ENCODE measurements at regions of chr1 and their contacts with region 1.

Region 1: DNA sequence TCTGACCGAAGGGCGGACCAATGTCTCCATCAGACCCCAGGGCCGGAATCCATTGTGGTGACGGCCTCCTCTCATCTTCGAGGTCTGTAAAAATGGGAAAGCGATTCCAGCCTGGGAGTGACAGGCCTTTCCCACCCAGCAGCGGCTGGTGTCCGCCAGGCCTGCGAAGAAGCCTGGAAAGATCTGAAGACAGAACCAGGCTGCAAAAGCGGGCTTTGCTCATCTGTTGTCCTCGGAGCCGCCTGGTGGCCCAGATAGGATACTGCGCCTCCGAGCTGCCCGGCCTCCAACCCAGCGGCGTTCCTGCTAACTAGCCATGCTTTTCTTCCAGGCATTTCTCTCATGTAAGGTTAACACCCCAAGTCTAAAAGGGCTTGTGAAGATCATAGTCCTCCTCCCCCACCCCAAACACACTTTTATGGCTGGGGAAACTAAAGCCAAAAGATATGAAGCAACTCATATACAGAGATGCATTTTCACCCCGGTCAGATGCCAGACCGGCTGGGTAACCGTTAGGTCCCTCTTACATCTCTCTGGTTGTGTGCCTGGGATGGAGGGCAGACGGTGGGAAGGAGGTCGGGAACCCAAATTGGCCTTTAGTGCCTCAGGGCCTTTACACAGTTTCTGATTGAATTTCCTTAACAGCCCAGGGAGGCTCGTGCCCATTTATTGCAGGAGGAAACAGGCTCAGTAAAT is 1.9 kb upstream of the DHRS3 start:
- DNase-seq: peak; percentile 55 to 79
- H3K4me3 ChIP-seq: peak overlapping the region; percentile 91
- H3K27ac ChIP-seq: peak overlapping the region; percentile 90
- H3K4me1 ChIP-seq: peaks cover 14% of the 10 kb centered on the region
- H3K27me3 ChIP-seq: no peaks in the 10 kb centered on the region
- CTCF ChIP-seq: peak; percentile 90

Region 2: DNA sequence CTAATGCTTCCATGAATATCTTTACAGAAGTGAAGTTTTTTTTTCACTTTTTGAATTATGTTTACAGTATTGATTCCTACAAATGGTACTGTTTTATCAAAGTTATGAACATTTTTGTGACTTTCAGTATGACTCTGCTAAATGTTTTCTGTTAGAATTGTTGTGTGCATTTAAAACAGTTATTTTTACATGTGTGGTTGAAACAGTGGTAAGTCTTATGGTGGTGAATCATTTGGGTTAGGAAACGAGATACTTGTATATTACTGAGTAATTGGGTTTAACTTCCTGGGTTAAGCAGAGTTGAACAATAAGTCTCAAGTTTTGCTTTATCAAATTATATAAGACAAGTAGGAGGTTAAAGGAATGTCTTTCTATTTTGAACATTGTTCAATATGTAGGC is 323.3 kb before region 1 on chr1:
- CTCF ChIA-PET with region 1: no interaction called
- POLR2A ChIA-PET with region 1: no interaction called
- intact Hi-C with region 1: no loop called
- DNase-seq: no peak
- H3K4me3 ChIP-seq: no peak overlapping the region
- H3K27ac ChIP-seq: peak overlapping the region; percentile 9; the same call in 1 of the 2 replicates
- H3K4me1 ChIP-seq: no peaks in the 10 kb centered on the region
- H3K27me3 ChIP-seq: no peaks in the 10 kb centered on the region
- CTCF ChIP-seq: no peak

Region 3: GRCh38 chr1:12359359-12360133 is 260.4 kb before region 1 on chr1:
- CTCF ChIA-PET with region 1: no interaction called
- POLR2A ChIA-PET with region 1: no interaction called
- intact Hi-C with region 1: no loop called
- DNase-seq: no peak
- H3K4me3 ChIP-seq: no peak overlapping the region
- H3K27ac ChIP-seq: no peak overlapping the region
- H3K4me1 ChIP-seq: no peaks in the 10 kb centered on the region
- H3K27me3 ChIP-seq: no peaks in the 10 kb centered on the region
- CTCF ChIP-seq: no peak

Region 4: GRCh38 chr1:12386130-12386529 is 233.8 kb before region 1 on chr1:
- CTCF ChIA-PET with region 1: no interaction called
- POLR2A ChIA-PET with region 1: no interaction called
- intact Hi-C with region 1: loop called (anchors 2 kb)
- DNase-seq: peak; percentile 52 to 83
- H3K4me3 ChIP-seq: no peak overlapping the region
- H3K27ac ChIP-seq: peak overlapping the region; percentile 64
- H3K4me1 ChIP-seq: peaks cover 37% of the 10 kb centered on the region
- H3K27me3 ChIP-seq: no peaks in the 10 kb centered on the region
- CTCF ChIP-seq: no peak

Region 5: GRCh38 chr1:12467570-12468286 is 152.2 kb before region 1 on chr1:
- CTCF ChIA-PET with region 1: no interaction called
- POLR2A ChIA-PET with region 1: no interaction called
- intact Hi-C with region 1: no loop called
- DNase-seq: no peak
- H3K4me3 ChIP-seq: no peak overlapping the region
- H3K27ac ChIP-seq: no peak overlapping the region
- H3K4me1 ChIP-seq: peaks cover 12% of the 10 kb centered on the region
- H3K27me3 ChIP-seq: no peaks in the 10 kb centered on the region
- CTCF ChIP-seq: no peak

Region 6: DNA sequence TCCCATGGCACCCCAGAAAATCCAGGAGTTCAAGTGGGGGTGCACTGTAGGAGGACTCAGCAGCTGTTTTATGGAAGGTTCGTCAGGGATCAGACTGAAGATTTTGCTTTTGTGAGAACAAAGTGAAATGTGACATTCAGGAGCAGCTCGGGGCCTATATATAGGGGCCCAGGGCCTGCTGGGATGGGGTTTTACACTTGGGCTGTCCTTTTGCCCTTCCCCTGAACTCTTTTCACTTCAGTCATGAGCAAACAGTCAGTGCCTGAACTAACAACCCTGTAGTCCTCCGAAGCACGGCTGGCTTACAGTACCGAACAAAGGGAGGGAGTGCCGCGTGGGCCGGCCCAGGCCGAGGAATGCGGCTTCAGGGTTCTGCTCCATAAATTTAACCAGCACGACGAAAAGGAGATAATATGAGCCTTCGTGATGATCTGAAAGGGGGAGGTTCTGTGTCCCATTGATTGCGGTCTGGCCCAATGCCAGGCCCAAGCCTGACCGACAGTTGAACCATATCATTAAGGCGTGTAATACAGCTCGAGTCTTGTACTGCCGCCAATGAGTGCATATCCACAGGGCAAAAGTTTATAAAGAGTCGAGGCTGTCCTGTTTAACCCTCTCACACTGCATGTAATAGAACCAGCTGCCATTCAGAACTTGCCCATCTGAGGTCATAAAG is 141.9 kb before region 1 on chr1:
- CTCF ChIA-PET with region 1: interaction called, 7 read pairs
- POLR2A ChIA-PET with region 1: interaction called, 18 read pairs
- intact Hi-C with region 1: loop called (anchors 1 kb)
- DNase-seq: peak; percentile 94 to 95
- H3K4me3 ChIP-seq: peak overlapping the region; percentile 29; the same call in 1 of the 2 replicates
- H3K27ac ChIP-seq: peak overlapping the region; percentile 96
- H3K4me1 ChIP-seq: peaks cover 82% of the 10 kb centered on the region
- H3K27me3 ChIP-seq: no peaks in the 10 kb centered on the region
- CTCF ChIP-seq: no peak

Region 7: GRCh38 chr1:12572506-12572905 is 47.4 kb before region 1 on chr1:
- CTCF ChIA-PET with region 1: no interaction called
- POLR2A ChIA-PET with region 1: interaction called, 11 read pairs
- intact Hi-C with region 1: loop called (anchors 1 kb)
- DNase-seq: no peak
- H3K4me3 ChIP-seq: no peak overlapping the region
- H3K27ac ChIP-seq: no peak overlapping the region
- H3K4me1 ChIP-seq: peaks cover 20% of the 10 kb centered on the region
- H3K27me3 ChIP-seq: no peaks in the 10 kb centered on the region
- CTCF ChIP-seq: no peak

Region 8: GRCh38 chr1:12631571-12631970 is 11.6 kb after region 1 on chr1:
- CTCF ChIA-PET with region 1: interaction called, 13 read pairs
- POLR2A ChIA-PET with region 1: no interaction called
- intact Hi-C with region 1: no loop called
- DNase-seq: no peak
- H3K4me3 ChIP-seq: no peak overlapping the region
- H3K27ac ChIP-seq: no peak overlapping the region
- H3K4me1 ChIP-seq: no peaks in the 10 kb centered on the region
- H3K27me3 ChIP-seq: no peaks in the 10 kb centered on the region
- CTCF ChIP-seq: no peak